HCT116 (cell line): ENCODE measurements at regions of chr20 and their contacts with region 1.

Region 1: GRCh38 chr20:13105864-13106457 is 97.2 kb downstream of the SPTLC3 start:
- DNase-seq: peak; percentile 13
- ATAC-seq: 0 out of 2 replicates have a peak, but pooled peaks have one; percentile 38
- H3K4me3 ChIP-seq: no peak overlapping the region
- H3K27ac ChIP-seq: no peak overlapping the region
- H3K4me1 ChIP-seq: no peaks in the 10 kb centered on the region
- H3K27me3 ChIP-seq: peaks cover 19% of the 10 kb centered on the region
- CTCF ChIP-seq: peak; percentile 49 to 68 (median 58); a peak in 5 of 6 replicates
- POLR2A ChIP-seq: no peak
- RAD21 ChIP-seq: peak; percentile 65

Region 2: DNA sequence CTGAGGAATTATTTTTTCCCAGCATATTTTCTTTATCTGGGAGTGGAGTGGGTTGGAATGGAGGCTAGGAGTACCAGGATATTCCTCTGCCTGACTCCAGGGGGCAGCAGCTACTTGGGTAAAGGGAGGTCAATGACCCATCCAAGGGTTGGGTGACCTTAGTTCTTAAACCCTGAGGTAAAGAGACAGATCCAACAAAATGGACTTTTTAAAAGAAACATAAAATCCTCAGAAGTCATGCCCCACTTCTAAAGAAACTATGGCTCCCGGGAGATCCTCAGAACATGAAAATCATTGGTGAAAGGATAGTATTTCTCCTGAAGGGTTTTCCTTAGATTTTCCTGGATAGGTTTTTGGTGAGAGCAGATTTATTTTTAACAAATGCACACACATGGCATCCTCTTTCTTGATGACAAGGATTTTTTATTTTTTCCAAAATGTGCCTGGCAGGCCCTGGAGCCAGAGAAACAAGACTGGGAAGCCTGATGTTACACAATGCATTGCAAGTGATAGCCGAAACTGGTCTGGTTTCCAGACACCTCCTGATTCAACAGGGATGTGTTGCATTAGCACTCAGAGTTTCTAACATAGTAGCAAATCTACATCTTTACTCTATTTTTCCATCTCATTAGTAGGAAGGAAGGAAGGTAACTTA is 1429.2 kb before region 1 on chr20:
- CTCF ChIA-PET with region 1: no interaction called
- POLR2A ChIA-PET with region 1: no interaction called
- RAD21 ChIA-PET with region 1: no interaction called
- intact Hi-C with region 1: loop called (anchors 1 kb)
- DNase-seq: peak; percentile 6
- ATAC-seq: peak; percentile 86
- H3K4me3 ChIP-seq: no peak overlapping the region
- H3K27ac ChIP-seq: no peak overlapping the region
- H3K4me1 ChIP-seq: no peaks in the 10 kb centered on the region
- H3K27me3 ChIP-seq: peaks cover 4% of the 10 kb centered on the region; the same call in 1 of the 2 replicates
- CTCF ChIP-seq: peak; percentile 32 to 82 (median 73); a peak in 5 of 6 replicates
- POLR2A ChIP-seq: no peak
- RAD21 ChIP-seq: peak; percentile 67

Region 3: GRCh38 chr20:12925214-12925755 is 180.7 kb before region 1 on chr20:
- CTCF ChIA-PET with region 1: no interaction called
- POLR2A ChIA-PET with region 1: no interaction called
- RAD21 ChIA-PET with region 1: no interaction called
- intact Hi-C with region 1: loop called (anchors 2 kb)
- DNase-seq: peak; percentile 19
- ATAC-seq: peak; percentile 80
- H3K4me3 ChIP-seq: no peak overlapping the region
- H3K27ac ChIP-seq: no peak overlapping the region
- H3K4me1 ChIP-seq: no peaks in the 10 kb centered on the region
- H3K27me3 ChIP-seq: 0 out of 2 replicates have a peak, but pooled peaks cover 3% of the 10 kb centered on the region
- CTCF ChIP-seq: peak; percentile 53 to 67 (median 58); a peak in 5 of 6 replicates
- POLR2A ChIP-seq: no peak
- RAD21 ChIP-seq: peak; percentile 57

Region 4: GRCh38 chr20:12970372-12970821 is 135.6 kb before region 1 on chr20:
- CTCF ChIA-PET with region 1: no interaction called
- POLR2A ChIA-PET with region 1: no interaction called
- RAD21 ChIA-PET with region 1: no interaction called
- intact Hi-C with region 1: loop called (anchors 1 kb)
- DNase-seq: no peak
- ATAC-seq: peak; percentile 52
- H3K4me3 ChIP-seq: no peak overlapping the region
- H3K27ac ChIP-seq: no peak overlapping the region
- H3K4me1 ChIP-seq: no peaks in the 10 kb centered on the region
- H3K27me3 ChIP-seq: no peaks in the 10 kb centered on the region
- CTCF ChIP-seq: peak in 2 of 3 experiments; percentile 8 to 36; a peak in 2 of 6 replicates
- POLR2A ChIP-seq: no peak
- RAD21 ChIP-seq: peak; percentile 48

Region 5: DNA sequence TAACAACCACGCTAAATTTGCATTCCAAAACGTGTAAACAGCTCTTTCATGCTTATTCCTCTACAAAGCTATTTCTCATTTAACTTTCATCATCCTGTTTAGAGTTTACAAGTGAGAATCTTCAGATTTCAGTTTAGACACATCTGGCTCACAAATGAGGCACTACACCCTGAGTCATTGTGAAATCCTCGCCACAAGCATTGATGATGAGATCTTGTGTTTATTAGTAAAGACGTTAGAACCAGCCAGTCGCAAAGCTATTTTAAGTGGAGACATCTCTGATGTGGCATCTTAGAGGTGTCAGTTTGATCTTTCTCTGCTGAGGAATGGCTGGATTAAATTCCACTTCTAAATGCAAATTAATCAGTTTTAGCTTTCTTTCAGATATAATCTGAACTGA is 106.8 kb after region 1 on chr20:
- CTCF ChIA-PET with region 1: no interaction called
- POLR2A ChIA-PET with region 1: no interaction called
- RAD21 ChIA-PET with region 1: no interaction called
- intact Hi-C with region 1: no loop called
- DNase-seq: no peak
- ATAC-seq: no peak
- H3K4me3 ChIP-seq: no peak overlapping the region
- H3K27ac ChIP-seq: no peak overlapping the region
- H3K4me1 ChIP-seq: no peaks in the 10 kb centered on the region
- H3K27me3 ChIP-seq: peaks cover 35% of the 10 kb centered on the region
- CTCF ChIP-seq: no peak
- POLR2A ChIP-seq: no peak
- RAD21 ChIP-seq: no peak